ENCODE measurements at regions of chr10 and their contacts with region 1.

Region 1: GRCh38 chr10:29443745-29444523 is 155.1 kb downstream of the LYZL1 start:
- DNase-seq: no peak
- ATAC-seq: no peak
- H3K4me3 Mint-ChIP-seq: no peak overlapping the region
- H3K27ac Mint-ChIP-seq: no peak overlapping the region
- H3K4me1 Mint-ChIP-seq: no peaks in the 10 kb centered on the region
- H3K27me3 Mint-ChIP-seq: no peaks in the 10 kb centered on the region
- CTCF ChIP-seq: no peak

Region 2: DNA sequence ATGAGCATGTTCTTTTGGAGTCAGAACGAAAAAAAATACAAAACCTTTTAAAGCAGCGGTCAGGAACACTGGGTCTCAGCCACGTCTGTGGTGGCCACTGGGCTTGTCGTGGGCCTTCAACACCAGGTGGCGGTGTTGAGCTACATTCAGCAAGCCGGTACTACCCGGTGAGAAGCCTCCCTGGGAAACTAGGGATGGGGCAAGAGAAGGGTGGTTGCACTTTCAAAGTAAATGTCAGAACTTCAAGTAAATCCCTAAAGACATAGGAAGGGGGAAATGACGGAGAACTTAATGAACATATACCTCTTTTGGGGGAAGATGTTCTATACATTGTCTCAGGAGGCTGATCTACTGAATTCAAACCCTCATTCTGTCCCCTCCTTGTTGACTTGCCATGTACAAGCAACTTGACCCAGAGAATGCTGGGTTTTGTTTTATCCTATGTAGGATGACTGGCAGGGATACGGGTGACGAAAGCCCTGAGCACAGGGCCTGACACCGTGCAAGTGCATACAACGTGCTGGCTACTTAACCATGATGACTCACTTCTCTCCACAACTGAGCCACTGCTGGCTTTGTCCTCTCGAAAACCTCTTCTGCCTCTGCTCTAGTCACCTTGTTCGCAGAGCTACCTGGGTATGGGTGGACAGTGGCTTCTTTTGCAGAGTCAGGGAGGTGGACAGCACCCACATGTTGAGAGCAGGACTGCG is 815.6 kb before region 1 on chr10:
- CTCF ChIA-PET with region 1: no interaction called
- POLR2A ChIA-PET with region 1: no interaction called
- intact Hi-C with region 1: loop called (anchors 2 kb)
- DNase-seq: peak; percentile 41
- ATAC-seq: peak; percentile 66
- H3K4me3 Mint-ChIP-seq: no peak overlapping the region
- H3K27ac Mint-ChIP-seq: no peak overlapping the region
- H3K4me1 Mint-ChIP-seq: peaks cover 6% of the 10 kb centered on the region
- H3K27me3 Mint-ChIP-seq: peaks cover 17% of the 10 kb centered on the region
- CTCF ChIP-seq: peak; percentile 90

Region 3: DNA sequence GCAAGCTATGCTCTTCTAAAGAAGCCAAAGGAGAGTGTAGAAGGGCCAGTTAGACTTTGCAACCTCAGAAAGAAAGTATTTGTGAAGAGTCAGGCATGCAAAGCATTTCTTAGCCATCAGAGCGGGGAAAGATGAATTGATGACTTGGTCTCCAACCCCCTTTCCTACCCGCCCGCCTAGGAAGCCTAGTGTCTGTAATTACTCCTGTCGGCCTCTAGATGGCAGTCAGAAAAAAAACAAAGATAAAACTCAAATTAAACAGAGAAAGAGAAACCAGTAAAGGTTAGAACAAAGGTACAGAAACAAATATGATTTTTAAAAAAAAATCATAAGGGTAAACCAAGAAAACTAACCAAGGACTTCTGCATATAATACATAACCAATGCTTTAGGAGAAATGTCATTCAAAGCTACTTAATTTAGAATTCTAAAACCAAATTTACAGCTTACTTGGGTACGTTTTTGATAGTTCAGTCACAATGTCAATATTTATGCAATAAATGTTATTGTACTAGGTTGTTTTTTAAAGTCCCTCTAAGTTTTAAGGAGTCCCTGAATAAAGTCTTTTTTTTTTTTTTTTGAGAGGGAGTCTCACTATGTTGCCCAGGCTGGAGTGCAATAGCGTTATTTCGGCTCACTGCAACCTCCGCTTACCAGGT is 57.5 kb before region 1 on chr10:
- CTCF ChIA-PET with region 1: interaction called, 5 read pairs
- POLR2A ChIA-PET with region 1: no interaction called
- intact Hi-C with region 1: loop called (anchors 1 kb)
- DNase-seq: no peak
- ATAC-seq: peak; percentile 49
- H3K4me3 Mint-ChIP-seq: no peak overlapping the region
- H3K27ac Mint-ChIP-seq: no peak overlapping the region
- H3K4me1 Mint-ChIP-seq: no peaks in the 10 kb centered on the region
- H3K27me3 Mint-ChIP-seq: peaks cover 4% of the 10 kb centered on the region
- CTCF ChIP-seq: peak; percentile 34

Region 4: DNA sequence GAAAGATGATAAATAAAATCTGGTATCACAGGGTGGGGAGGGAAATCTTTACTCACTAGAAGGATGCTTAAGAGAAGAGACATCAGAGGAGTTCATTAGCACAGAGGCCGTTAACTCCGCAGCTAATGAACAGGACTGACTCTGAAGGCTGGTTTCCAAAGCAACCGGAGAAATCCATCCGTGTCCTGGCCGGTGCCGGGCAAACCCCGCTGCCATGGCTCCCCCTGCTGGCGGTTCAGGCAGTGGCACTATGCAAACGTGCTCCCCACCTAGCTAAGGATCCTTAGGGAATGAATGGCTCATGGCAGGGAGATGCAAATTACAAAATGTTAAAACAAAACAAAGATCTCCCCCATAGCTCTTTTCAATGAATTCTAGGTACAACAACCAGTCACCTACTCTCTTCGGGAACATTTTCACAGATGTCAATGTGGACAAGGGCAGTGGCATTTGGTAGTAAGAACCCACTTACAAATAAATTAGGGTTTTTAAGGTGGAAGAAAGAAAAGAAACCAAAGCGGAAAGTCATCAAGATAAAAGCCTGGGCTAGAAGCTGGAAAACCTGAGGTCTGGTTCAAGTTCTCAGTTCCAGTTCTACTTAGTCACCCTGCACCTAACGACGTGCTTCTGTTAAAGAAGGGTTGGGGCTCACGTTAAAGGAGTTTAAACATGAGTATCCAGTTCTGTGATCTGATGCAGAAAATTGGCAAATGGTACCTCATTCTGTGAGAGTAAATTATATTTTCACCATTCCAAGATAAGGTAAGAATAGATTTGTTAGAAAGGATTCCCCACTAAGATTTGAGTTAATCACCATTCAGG is 52.6 kb after region 1 on chr10:
- CTCF ChIA-PET with region 1: no interaction called
- POLR2A ChIA-PET with region 1: no interaction called
- intact Hi-C with region 1: loop called (anchors 2 kb)
- DNase-seq: no peak
- ATAC-seq: peak; percentile 42
- H3K4me3 Mint-ChIP-seq: no peak overlapping the region
- H3K27ac Mint-ChIP-seq: no peak overlapping the region
- H3K4me1 Mint-ChIP-seq: no peaks in the 10 kb centered on the region
- H3K27me3 Mint-ChIP-seq: peaks cover 3% of the 10 kb centered on the region
- CTCF ChIP-seq: peak; percentile 54

Region 5: GRCh38 chr10:29590915-29591650 is 147.1 kb after region 1 on chr10:
- CTCF ChIA-PET with region 1: no interaction called
- POLR2A ChIA-PET with region 1: no interaction called
- intact Hi-C with region 1: loop called (anchors 1 kb)
- DNase-seq: no peak
- ATAC-seq: no peak
- H3K4me3 Mint-ChIP-seq: no peak overlapping the region
- H3K27ac Mint-ChIP-seq: no peak overlapping the region
- H3K4me1 Mint-ChIP-seq: peaks cover 8% of the 10 kb centered on the region
- H3K27me3 Mint-ChIP-seq: no peaks in the 10 kb centered on the region
- CTCF ChIP-seq: no peak

Measured in activated B cell treated with CpG ODN at 0.5 μM for 24 hours (primary cell).